Calu3 (cell line): ENCODE measurements at regions of chr6 and their contacts with region 1.

Region 1: DNA sequence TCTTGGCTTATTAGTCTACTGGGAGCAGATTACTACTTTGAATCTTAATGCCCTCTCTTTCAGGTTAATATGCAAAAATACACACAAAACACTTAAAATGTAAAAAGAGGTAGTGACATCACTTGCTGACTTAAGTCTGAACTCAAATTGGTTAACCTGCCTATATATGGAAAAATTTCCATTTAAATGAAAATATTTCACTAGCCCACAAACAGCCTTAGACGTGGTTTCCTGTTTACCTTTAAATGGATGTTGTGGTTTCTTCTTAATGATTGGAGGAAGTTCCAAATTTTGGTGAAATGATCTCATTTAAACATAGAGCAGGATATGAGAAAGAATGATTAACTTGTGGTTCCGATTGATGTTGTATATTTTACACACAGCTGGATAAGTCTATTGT is 553.7 kb downstream of the CD109 start:
- DNase-seq: no peak
- H3K4me3 Mint-ChIP-seq: no peak overlapping the region
- H3K27ac Mint-ChIP-seq: peak overlapping the region; percentile 78
- H3K4me1 Mint-ChIP-seq: peaks cover 48% of the 10 kb centered on the region
- H3K27me3 Mint-ChIP-seq: no peaks in the 10 kb centered on the region
- CTCF ChIP-seq: no peak

Region 2: DNA sequence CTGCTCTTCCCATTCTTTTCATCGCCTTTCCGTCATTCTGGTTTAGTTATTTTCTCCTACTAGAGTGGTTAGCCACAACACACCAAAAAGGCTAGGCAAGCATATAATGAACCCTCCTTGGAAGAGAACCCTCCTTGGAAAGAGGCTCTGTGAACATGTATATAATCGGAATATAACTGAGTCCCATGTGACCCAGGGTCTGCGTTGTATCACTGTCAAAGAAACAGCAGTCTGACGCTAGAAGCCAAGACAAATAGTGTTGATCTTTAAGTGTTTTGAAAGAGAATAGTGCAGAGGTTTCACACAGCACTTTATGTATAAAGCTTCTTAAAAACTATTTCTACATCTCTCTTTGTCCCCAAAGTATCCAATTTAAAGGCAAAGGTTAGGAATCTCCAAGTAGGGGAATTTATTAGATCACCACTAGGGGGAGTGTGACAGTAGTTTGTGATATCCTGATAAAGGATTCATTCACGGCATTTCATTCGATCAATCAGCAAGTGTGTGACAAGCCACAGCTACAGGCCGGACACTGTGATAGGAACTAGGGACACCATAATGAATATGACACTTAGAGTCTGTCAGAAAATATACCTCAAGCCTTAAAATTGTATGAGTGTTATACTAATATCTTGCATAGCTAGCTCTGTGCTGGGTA is 158.4 kb before region 1 on chr6:
- CTCF ChIA-PET with region 1: no interaction called
- intact Hi-C with region 1: loop called (anchors 2 kb)
- DNase-seq: peak; percentile 25
- H3K4me3 Mint-ChIP-seq: no peak overlapping the region
- H3K27ac Mint-ChIP-seq: no peak overlapping the region
- H3K4me1 Mint-ChIP-seq: peaks cover 9% of the 10 kb centered on the region
- H3K27me3 Mint-ChIP-seq: no peaks in the 10 kb centered on the region
- CTCF ChIP-seq: peak; percentile 52

Region 3: DNA sequence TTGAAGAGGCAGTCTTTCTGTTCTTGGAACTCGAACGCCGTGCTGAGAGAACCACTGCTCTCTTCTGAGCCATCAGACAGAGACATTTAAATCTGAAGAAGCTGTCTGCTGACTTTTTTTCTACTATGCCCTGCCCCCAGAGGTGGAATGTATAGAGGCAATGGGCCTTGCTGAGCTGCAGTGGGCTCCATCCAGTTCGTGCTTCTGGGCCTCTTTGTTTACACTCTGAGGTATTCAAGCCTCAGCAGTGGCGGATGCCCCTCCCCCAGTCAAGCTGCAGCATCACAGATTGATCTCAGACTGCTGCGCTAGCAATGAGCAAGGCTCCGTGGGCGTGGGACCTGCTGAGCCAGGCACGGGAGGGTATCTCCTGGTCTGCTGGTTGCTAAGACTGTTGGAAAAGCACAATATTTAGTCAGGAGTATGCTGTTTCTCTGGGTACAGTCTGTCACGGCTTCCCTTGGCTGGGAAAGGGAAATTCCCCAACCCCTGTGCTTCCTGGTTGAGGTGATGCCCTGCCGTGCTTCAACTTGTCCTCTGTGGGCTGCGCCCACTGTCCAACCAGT is 26.8 kb before region 1 on chr6:
- CTCF ChIA-PET with region 1: interaction called, 16 read pairs
- intact Hi-C with region 1: no loop called
- DNase-seq: peak; percentile 70
- H3K4me3 Mint-ChIP-seq: peak overlapping the region; percentile 29
- H3K27ac Mint-ChIP-seq: peak overlapping the region; percentile 30
- H3K4me1 Mint-ChIP-seq: peaks cover 7% of the 10 kb centered on the region
- H3K27me3 Mint-ChIP-seq: no peaks in the 10 kb centered on the region
- CTCF ChIP-seq: no peak

Region 4: DNA sequence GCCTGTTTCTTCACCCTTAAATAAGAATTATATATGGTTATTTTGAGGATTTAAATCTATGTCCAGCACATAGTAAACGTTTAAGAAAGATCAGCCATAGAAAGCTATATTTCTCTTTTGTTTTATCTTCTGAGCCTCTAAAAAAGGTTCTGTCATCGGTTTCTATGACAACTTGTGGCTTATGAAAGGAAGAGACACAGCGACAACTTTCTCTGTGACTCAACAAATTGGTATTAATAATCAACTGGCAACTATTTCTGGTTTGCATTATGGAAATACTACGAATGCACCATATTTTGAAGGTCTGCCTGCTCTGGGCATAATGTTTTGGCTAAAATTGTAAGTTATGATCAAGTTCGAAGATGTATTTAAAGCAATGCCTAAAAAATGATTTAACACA is 197.4 kb after region 1 on chr6:
- CTCF ChIA-PET with region 1: interaction called, 12 read pairs
- intact Hi-C with region 1: no loop called
- DNase-seq: no peak
- H3K4me3 Mint-ChIP-seq: no peak overlapping the region
- H3K27ac Mint-ChIP-seq: no peak overlapping the region
- H3K4me1 Mint-ChIP-seq: peaks cover 18% of the 10 kb centered on the region
- H3K27me3 Mint-ChIP-seq: no peaks in the 10 kb centered on the region
- CTCF ChIP-seq: no peak